ENCODE measurements at regions of chr12 and their contacts with region 1.

Region 1: GRCh38 chr12:98516184-98516873 is 939 bp downstream of the TMPO start:
- DNase-seq: peak; percentile 70
- H3K4me3 ChIP-seq: peak overlapping the region; percentile 98
- H3K27ac ChIP-seq: peak overlapping the region; percentile 96
- H3K4me1 ChIP-seq: peaks cover 52% of the 10 kb centered on the region
- H3K27me3 ChIP-seq: no peaks in the 10 kb centered on the region
- CTCF ChIP-seq: peak; percentile 79

Region 2: DNA sequence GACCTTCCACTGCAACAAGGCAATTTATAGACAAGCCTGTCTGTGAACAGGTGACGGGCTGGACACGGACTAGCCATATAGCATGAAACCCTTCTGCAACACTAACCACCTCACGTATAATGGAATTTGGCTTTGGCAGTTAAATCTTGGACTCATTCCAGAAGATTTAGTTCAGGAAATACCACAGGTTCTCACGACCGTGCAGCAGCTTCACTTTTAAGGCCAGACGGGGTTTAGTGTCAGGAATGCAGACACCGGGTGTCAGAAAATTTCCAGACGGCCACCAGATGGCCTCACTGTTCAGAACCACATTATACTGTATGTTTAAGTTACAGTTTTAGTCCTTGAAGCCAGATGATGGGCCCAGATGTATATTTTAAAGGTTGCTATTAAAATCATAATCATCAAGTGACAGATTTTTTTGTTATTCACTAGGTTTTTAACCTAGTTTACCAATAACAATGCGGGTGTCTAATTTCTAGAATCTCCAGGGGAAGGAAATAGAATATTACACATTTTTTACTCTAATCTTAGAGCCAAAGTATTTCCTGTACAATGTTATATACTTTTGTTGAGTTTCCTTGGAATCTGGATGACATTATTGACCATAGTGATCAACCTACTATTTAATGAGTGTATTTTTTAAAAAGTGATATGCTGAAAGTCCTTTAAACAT is 91.5 kb before region 1 on chr12:
- intact Hi-C with region 1: loop called (anchors 10 kb)
- DNase-seq: peak; percentile 51
- H3K4me3 ChIP-seq: no peak overlapping the region
- H3K27ac ChIP-seq: no peak overlapping the region
- H3K4me1 ChIP-seq: peaks cover 21% of the 10 kb centered on the region
- H3K27me3 ChIP-seq: peaks cover 5% of the 10 kb centered on the region
- CTCF ChIP-seq: peak; percentile 75

Region 3: DNA sequence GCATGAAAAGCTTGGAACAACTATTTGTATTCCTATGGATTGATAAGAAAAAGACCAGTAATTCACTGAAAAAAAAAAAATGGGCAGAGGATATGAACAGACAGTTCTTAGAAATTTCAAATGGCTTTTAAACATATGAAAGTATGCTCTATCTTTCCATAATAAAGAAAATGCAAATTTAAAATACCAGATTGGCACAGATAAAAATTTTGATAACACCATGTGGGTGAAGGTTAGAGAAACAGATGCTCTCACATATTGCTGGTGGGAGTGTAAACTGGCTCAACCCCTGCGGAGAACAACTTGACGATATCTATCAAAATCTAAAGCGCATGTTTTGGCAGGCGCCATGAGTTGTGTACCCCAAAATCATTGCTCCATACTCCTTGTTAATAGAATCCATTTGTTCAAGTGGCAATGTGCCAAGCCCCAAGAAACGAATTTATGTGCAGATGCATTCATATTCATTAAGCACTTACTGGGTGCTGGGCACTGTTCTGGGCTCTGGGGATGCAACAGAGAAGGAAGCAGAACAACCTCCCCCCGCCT is 30.5 kb before region 1 on chr12:
- intact Hi-C with region 1: loop called (anchors 5 kb)
- DNase-seq: no peak
- H3K4me3 ChIP-seq: no peak overlapping the region
- H3K27ac ChIP-seq: no peak overlapping the region
- H3K4me1 ChIP-seq: peaks cover 4% of the 10 kb centered on the region
- H3K27me3 ChIP-seq: no peaks in the 10 kb centered on the region
- CTCF ChIP-seq: no peak

Region 4: GRCh38 chr12:98593351-98594049 is 77.2 kb after region 1 on chr12 and contains the start of gene SLC25A3:
- intact Hi-C with region 1: no loop called
- DNase-seq: peak; percentile 95
- H3K4me3 ChIP-seq: peak within 1 kb of the TSS; percentile 100
- H3K27ac ChIP-seq: peak within 1 kb of the TSS; percentile 98
- H3K4me1 ChIP-seq: peaks cover 57% of the 10 kb centered on the region
- H3K27me3 ChIP-seq: no peaks in the 10 kb centered on the region
- CTCF ChIP-seq: no peak
- total RNA-seq, gene SLC25A3: 1,638 TPM